Heart right ventricle (tissue), 16 donors: ENCODE measurements at regions of chr2 and their contacts with region 1.

Region 1: GRCh38 chr2:206249714-206250591 is 24.5 kb upstream of the ZDBF2 start:
- DNase-seq: no peak
- ATAC-seq: peak in 2 of 8 donors; percentile 46 to 64
- H3K4me3 ChIP-seq: peak overlapping the region in 6 of 10 donors; percentile 14 to 36 (median 23)
- H3K27ac ChIP-seq: no peak overlapping the region
- H3K4me1 ChIP-seq: no peaks in the 10 kb centered on the region
- H3K27me3 ChIP-seq: peaks cover 0 to 80% (median 54%) of the 10 kb centered on the region in 7 donors
- CTCF ChIP-seq: no peak

Region 2: DNA sequence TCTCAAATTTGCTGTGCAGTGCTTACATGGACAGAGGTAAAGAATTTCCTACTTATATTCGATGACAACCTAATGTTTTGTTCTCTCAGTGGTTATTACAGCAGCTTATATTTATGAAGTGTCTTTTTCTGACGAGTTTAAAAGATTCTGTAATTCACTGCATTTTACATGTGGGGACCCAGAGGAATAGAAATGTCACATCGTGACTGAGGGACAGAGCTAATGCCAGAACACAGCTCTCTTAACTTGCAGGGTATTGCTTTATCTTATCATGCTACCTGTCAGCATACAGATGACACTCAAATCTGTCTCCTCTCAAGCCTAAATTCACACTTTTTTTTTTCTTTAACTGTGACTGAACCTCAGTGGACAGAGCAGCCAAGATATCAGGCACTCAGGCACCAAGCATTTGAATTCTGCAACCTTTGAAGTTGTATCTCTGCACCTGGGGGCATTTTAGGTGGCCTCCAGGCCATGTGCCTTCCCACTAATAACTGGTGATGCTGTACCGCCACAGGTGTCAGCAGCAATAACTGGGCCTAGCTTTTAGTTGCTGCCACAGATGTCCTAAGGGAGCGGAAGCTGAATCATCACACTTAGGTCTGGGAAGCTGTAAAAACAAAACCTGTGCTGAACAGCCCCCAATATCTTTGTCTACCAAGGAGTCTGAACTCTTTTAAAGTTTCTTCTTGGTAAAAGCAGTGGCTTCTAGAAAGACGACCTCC is 883.5 kb before region 1 on chr2:
- intact Hi-C with region 1: no loop called
- DNase-seq: no peak
- ATAC-seq: no peak
- H3K4me3 ChIP-seq: no peak overlapping the region
- H3K27ac ChIP-seq: no peak overlapping the region
- H3K4me1 ChIP-seq: peaks cover 0 to 12% (median 0%) of the 10 kb centered on the region in 9 donors
- H3K27me3 ChIP-seq: no peaks in the 10 kb centered on the region
- CTCF ChIP-seq: no peak

Region 3: DNA sequence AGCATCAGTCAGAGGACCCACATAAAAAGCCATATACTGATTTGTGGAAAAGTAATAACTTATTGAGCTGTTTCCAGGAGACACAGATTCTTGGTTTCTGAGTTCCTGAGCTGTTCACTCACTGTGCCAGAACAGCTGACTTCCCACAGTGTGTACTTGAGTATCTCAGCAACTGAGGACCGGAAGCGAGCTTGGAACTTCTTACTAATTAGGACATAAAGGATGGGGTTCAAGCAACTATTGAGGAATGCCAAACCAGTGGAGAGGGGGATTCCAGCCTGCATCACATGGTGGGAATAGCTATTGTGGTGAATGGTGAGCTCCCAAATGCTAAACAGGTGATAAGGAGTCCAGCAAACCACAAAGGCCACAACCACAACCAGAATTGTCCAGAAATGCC is 73.8 kb before region 1 on chr2:
- intact Hi-C with region 1: loop called in 1 of 10 experiments (anchors 10 kb)
- DNase-seq: no peak
- ATAC-seq: peak in 2 of 8 donors; percentile 22 to 64
- H3K4me3 ChIP-seq: no peak overlapping the region
- H3K27ac ChIP-seq: no peak overlapping the region
- H3K4me1 ChIP-seq: no peaks in the 10 kb centered on the region
- H3K27me3 ChIP-seq: no peaks in the 10 kb centered on the region
- CTCF ChIP-seq: no peak